ENCODE measurements at regions of chr14 and their contacts with region 1.

Region 1: DNA sequence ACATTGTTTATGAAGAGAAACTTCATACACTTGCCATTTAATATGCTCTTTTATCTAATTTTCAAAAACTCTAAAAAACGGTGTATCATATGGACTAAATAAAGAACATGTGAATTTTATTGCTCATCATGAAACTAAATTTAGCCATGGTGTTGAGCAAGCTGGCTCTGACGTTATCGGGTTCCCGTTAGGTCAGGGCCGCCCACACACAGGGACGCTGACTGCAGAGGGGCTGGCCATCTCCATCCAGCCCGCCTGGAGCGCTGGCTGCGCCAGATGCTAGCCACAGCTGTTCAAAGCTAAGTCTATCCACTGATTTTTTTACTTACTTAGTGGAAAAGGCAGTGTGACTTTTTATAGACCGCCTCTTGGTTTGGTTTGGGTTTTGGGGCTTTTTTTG is 36.5 kb upstream of the DYNC1H1 start:
- DNase-seq: peak; percentile 96
- H3K4me3 ChIP-seq: no peak overlapping the region
- H3K27ac ChIP-seq: peak overlapping the region; percentile 54 to 78 (median 74)
- H3K4me1 ChIP-seq: peaks cover 0 to 23% (median 14%) of the 10 kb centered on the region in 4 donors
- H3K27me3 ChIP-seq: no peaks in the 10 kb centered on the region
- CTCF ChIP-seq: no peak
- EP300 ChIP-seq: peak; percentile 46 to 92 (median 83)
- POLR2A ChIP-seq: no peak

Region 2: GRCh38 chr14:101903111-101903561 is 24.7 kb before region 1 on chr14:
- intact Hi-C with region 1: no loop called
- DNase-seq: no peak
- H3K4me3 ChIP-seq: no peak overlapping the region
- H3K27ac ChIP-seq: no peak overlapping the region
- H3K4me1 ChIP-seq: no peaks in the 10 kb centered on the region
- H3K27me3 ChIP-seq: no peaks in the 10 kb centered on the region
- CTCF ChIP-seq: no peak
- EP300 ChIP-seq: no peak
- POLR2A ChIP-seq: no peak

Region 3: DNA sequence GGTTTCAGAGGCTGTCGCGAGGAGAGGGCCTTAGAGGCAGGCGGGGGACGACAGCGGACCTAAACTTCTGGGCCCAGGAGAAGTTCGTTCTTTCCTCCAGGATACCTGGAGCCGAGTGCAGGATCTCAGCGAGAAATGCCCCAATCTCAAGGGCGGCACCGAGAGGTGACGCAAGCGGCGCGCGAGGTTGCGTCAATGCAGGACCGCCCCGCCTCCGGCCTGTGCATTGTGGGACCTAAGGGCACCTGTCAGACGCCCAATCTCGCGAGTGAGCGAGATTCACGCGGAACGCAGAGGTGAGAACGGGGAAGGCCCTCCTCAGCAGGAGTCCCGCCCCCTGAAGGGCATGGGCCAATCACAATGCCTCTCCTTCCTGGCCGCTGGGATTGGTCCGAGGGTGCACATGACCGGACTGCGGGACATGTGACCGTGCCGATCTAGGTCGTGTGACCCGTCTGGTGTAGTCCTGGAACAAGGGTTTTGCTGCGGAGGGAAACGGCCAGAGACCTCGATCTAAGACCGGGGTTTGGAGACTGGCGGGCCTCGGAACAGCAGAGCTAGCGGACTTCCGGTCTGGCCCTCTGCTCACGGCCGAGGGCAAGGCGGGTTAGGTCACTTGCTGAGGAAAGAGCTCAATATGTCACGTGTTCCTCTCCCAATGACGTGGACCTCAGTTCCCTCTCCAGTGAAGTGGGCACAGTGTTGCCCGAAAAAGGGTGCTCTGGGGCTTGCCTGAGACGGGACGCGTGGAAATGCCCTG is 20.2 kb after region 1 on chr14:
- intact Hi-C with region 1: loop called (anchors 2 kb)
- DNase-seq: peak; percentile 100
- H3K4me3 ChIP-seq: peak overlapping the region; percentile 63 to 88 (median 82)
- H3K27ac ChIP-seq: peak overlapping the region; percentile 94 to 99 (median 97)
- H3K4me1 ChIP-seq: peaks cover 0 to 24% (median 16%) of the 10 kb centered on the region in 4 donors
- H3K27me3 ChIP-seq: no peaks in the 10 kb centered on the region
- CTCF ChIP-seq: no peak
- EP300 ChIP-seq: peak in 2 of 4 donors; percentile 84 to 94
- POLR2A ChIP-seq: peak; percentile 95 to 96

Region 4: DNA sequence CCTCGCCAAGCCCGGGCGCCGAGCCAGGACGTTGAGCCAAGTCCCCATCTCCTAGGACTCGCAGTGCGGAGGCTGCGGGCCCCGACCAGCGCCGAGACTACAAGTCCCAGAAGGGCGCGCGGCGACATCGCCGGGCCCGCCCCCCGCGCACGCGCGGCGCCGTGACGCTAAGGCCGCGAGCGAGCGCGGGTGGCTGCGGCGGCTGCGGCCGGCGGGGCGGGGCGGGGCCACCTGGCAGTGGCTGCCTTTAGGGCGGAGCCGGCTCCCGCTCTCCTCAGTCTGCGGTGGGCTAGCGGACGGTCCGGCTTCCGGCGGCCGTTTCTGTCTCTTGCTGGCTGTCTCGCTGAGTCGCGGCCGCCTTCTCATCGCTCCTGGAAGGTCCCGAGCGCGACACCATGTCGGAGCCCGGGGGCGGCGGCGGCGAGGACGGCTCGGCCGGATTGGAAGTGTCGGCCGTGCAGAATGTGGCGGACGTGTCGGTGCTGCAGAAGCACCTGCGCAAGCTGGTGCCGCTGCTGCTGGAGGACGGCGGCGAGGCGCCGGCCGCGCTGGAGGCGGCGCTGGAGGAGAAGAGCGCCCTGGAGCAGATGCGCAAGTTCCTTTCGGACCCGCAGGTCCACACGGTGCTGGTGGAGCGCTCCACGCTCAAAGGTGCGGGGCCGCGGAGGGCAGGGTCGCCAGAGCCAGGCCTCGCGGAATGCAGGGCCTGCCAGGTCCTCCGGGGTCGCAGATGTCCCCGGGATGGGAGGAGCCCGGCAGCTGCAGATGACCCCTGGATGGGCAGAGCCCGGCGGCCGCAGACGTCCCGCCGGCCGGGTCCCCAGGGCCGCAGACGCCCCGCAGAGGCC is 36.7 kb after region 1 on chr14 and contains the start of gene DYNC1H1:
- intact Hi-C with region 1: no loop called
- DNase-seq: peak; percentile 99
- H3K4me3 ChIP-seq: peak within 1 kb of the TSS; percentile 89 to 100 (median 92)
- H3K27ac ChIP-seq: peak within 1 kb of the TSS; percentile 88 to 100 (median 96)
- H3K4me1 ChIP-seq: peaks cover 0 to 62% (median 43%) of the 10 kb centered on the region in 4 donors
- H3K27me3 ChIP-seq: no peaks in the 10 kb centered on the region
- CTCF ChIP-seq: no peak
- EP300 ChIP-seq: no peak
- POLR2A ChIP-seq: peak; percentile 95 to 96
- total RNA-seq, gene DYNC1H1: 320 to 592 (median 485) TPM

Measured in sigmoid colon (tissue), 7 donors.